ENCODE measurements at regions of chr14 and their contacts with region 1.

Region 1: DNA sequence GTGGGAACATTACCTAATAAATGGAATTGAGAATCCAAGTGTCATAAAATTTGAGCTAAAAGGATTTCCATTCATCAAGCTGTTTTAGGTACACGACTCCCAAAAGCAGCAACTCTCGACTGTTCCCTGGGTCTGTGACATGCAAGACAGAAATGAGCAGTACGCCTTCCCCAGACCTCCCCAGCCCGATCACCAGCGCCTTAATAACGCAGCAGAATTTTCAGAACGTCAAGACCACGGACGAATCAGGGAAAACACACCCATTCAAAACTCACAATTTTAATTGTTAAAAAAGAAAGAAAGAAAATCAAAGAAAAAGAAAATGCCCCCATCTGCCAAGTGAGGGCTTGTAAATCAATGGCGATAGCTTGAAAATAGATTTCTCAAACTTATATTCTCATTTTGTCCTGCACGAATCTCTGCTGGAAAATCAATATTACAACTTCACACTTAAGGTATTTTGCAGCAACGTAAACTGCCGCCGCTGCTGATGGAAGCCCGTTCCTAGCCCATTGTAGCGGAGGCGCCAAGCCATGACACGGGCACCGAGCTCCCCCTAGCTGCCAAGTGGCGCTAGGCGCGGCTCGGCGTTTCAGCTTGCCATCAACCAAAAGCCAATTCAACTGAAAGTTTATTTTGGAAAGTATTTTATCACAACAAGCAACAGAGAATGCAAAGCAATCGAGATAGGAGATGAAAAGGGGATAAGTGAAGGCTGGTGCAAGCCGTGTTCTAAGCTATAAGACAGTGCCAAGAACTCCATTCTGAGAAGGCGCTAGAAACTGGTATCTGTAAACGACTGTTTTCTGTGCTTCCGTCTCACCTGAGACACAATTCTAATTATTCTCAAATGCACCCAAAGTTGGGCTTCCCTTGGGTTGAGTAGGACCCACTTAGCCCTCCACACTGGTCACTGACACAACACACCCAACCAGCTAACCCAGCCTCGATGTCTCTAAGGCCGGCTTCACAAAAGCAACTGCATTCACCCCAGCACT is 5.5 kb downstream of the BCL11B start:
- DNase-seq: peak; percentile 93
- H3K4me3 Mint-ChIP-seq: peak overlapping the region; percentile 96
- H3K27ac Mint-ChIP-seq: peak overlapping the region; percentile 100
- H3K4me1 Mint-ChIP-seq: peaks cover 52% of the 10 kb centered on the region
- H3K27me3 Mint-ChIP-seq: peaks cover under 1% of the 10 kb centered on the region

Region 2: DNA sequence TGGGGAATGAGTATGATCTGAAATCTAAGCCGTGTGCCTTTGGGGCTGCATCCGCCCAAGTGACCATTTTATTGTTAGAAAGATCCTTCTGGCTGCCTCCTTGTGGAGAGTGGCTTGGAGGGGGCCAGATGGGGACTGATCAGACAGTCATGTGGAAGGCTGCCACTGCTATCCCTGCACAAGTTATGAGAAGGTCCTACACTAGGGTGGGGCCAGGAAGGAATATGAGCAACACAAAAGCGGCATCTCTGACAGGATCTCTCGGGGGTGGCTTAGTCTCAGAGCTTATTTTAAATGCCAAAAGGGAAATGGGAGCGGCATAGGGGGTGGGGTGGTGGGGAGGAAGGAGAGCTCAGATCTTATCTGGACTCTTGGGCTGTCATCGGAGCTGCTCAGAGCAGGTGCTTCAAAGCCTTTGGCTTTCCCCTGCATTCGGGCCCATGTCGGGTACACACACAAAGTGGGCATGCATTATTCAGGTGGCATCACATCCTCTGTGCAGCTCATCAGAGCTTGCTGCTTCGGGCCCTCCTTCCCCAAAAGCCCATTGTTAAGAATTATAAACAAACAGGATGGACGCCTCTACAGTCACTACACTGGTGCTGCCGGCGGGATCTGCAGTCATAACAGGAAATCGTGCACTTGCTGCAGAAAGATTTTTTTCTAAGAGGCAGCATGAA is 1663.9 kb before region 1 on chr14:
- CTCF ChIA-PET with region 1: no interaction called
- POLR2A ChIA-PET with region 1: no interaction called
- intact Hi-C with region 1: loop called (anchors 5 kb)
- DNase-seq: peak; percentile 80
- H3K4me3 Mint-ChIP-seq: no peak overlapping the region
- H3K27ac Mint-ChIP-seq: no peak overlapping the region
- H3K4me1 Mint-ChIP-seq: peaks cover 29% of the 10 kb centered on the region
- H3K27me3 Mint-ChIP-seq: no peaks in the 10 kb centered on the region

Region 3: DNA sequence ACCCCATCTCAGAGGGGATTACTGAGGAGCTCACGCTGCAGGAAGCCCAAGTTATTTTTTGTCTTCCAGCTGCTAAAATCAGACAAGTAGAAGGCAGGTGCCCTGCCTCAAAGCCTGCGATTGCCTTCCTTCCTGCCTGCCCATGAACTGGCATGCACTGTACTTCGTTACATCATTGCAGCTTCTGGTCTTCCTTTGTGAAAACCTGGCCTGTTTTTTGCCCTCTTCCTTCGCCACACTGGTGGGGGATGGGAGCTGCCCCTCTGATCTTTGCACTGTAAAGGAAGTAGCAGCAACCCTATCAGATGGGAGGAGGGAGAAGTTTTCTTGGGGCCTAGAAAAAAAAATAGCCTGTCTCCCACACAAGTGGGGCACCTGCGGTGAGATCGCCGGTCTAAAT is 1093.2 kb before region 1 on chr14:
- CTCF ChIA-PET with region 1: interaction called, 12 read pairs
- POLR2A ChIA-PET with region 1: interaction called, 16 read pairs
- intact Hi-C with region 1: loop called (anchors 2 kb)
- DNase-seq: peak; percentile 67
- H3K4me3 Mint-ChIP-seq: peak overlapping the region; percentile 62
- H3K27ac Mint-ChIP-seq: peak overlapping the region; percentile 98
- H3K4me1 Mint-ChIP-seq: peaks cover 98% of the 10 kb centered on the region
- H3K27me3 Mint-ChIP-seq: no peaks in the 10 kb centered on the region

Region 4: GRCh38 chr14:99192028-99192621 is 74.4 kb before region 1 on chr14:
- CTCF ChIA-PET with region 1: interaction called, 130 read pairs
- POLR2A ChIA-PET with region 1: interaction called, 49 read pairs
- intact Hi-C with region 1: loop called (anchors 1 kb)
- DNase-seq: peak; percentile 56
- H3K4me3 Mint-ChIP-seq: peak overlapping the region; percentile 84
- H3K27ac Mint-ChIP-seq: peak overlapping the region; percentile 88
- H3K4me1 Mint-ChIP-seq: peaks cover 92% of the 10 kb centered on the region
- H3K27me3 Mint-ChIP-seq: no peaks in the 10 kb centered on the region

Region 5: DNA sequence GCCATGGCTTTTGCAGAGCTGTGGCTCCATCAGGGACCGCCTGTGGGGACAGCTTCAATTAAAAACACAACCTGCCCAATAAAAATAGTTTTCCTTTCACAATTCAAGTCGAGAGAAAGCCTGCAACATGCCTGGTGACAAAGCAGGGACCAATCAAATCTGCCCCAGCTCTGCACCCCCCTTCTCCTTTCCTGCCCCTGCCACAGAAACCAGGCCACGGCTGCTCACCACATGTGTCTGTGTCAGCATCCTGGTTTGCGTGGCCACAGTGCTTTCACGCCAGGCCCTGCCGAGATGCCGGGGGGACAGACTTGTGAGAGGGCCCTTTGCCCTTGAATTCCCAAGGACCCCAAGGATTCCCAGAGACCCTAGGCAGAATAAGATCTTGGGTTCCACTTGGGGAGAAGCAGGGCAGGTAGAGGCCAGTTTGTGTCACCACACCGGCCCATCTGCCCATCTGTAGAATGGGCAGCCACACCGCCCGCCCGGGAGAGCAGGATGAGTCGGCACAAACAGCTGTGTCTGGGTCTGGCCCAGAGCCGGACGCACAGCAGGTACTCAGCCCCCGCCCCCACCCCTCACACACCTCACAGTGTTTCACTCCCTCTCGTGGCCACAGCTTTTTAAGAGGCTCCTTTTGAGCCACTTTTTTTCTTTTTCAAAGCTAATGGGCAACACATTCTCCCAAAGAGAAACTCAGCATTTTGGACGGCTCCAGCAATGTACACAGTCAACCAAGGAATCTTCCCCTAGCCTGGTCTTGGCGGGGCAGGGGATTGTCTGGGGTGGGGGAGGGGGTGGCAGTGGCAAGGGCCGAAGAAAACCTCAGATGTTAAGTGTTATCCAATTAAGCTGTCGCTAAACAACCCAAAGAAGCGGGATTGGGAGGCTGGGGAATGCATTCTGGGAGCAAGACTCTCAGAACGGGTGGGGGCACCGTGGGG is 36.0 kb before region 1 on chr14:
- CTCF ChIA-PET with region 1: interaction called, 110 read pairs
- POLR2A ChIA-PET with region 1: interaction called, 425 read pairs
- intact Hi-C with region 1: loop called (anchors 1 kb)
- DNase-seq: peak; percentile 94
- H3K4me3 Mint-ChIP-seq: peak overlapping the region; percentile 68
- H3K27ac Mint-ChIP-seq: peak overlapping the region; percentile 96
- H3K4me1 Mint-ChIP-seq: peaks cover 95% of the 10 kb centered on the region
- H3K27me3 Mint-ChIP-seq: no peaks in the 10 kb centered on the region

Region 6: DNA sequence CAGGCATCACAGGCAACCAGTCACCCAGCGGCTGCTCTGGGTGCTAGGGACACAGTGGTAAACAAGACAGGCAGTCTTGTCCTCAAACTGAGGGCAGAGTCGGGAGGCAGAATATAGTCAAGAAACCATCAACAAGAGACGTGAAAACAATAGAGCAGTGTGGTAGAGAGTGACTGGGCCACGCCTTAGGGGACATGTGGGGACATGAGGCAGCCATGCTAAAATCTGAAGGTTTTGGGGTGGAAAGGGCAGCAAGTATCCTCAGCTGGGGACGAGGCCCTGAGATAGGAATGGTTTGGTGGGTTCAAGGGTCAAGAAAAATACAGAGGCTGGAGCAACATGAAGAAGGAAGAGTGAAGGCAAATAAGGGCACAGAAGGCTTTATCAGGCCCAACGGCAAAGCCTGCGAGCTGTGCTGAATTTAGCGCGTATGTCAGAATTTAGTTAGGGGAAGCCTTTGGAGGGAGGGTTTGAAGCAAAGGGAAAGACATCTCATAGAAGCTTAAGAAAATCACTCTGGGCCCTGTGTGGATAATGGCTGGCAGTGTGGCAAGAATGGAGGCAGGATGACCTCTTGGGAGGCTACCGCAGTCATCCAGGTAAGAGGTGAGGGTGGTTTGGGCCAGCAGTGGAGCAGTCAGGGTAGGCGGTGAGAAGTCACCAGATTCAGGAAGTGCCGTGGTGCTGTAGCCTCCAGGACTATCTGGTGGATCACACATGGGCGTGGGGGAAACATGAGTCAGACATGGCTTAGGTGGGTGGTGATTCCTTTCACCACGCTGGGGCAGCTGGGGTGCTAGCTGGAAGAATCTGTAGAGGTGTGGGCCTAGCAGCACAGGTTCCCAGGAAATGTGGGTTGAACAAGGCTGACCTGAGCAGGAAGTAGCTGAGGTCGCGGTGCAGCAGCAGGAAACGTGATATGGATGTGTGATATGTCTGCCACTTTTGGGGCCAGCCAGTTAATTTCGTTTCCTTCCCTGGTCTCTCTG is 801.8 kb after region 1 on chr14:
- CTCF ChIA-PET with region 1: no interaction called
- POLR2A ChIA-PET with region 1: no interaction called
- intact Hi-C with region 1: loop called (anchors 10 kb)
- DNase-seq: peak; percentile 95
- H3K4me3 Mint-ChIP-seq: peak overlapping the region; percentile 81
- H3K27ac Mint-ChIP-seq: peak overlapping the region; percentile 98
- H3K4me1 Mint-ChIP-seq: peaks cover 81% of the 10 kb centered on the region
- H3K27me3 Mint-ChIP-seq: no peaks in the 10 kb centered on the region